Dorsolateral prefrontal cortex (tissue), 120 donors: ENCODE measurements at regions of chr10 and their contacts with region 1.

Region 1: DNA sequence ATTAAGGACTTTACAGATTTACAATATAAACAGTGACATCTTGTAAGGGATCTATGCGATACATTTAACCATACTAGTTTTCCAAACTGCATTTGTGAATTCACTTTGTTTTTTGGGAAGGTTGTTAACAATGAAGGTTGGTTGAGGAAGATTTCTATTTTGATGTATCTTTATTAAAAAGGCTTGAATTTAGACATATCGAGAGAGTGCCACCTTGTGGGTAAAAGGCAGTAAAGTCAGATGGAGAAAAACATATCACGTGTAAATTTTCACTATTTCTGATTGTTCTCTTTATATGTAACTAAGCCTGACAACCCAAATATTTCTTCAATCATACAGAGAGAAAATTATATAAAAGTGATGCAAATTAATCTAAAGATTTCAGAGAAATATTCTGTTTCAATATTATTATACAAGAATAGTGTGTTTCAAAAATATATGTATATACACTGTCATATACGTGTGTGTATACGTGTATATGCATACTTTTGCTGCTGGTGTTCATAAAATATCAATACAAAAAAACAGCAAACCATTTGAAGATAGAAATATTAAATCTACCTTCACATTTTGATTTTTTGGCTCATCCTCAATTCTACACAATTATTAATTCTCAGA is 988.6 kb downstream of the SORCS1 start:
- DNase-seq: no peak
- H3K4me3 ChIP-seq: no peak overlapping the region
- H3K27ac ChIP-seq: no peak overlapping the region
- H3K27me3 ChIP-seq: no peaks in the 10 kb centered on the region
- CTCF ChIP-seq: peak; percentile 45 to 83 (median 65)

Region 2: DNA sequence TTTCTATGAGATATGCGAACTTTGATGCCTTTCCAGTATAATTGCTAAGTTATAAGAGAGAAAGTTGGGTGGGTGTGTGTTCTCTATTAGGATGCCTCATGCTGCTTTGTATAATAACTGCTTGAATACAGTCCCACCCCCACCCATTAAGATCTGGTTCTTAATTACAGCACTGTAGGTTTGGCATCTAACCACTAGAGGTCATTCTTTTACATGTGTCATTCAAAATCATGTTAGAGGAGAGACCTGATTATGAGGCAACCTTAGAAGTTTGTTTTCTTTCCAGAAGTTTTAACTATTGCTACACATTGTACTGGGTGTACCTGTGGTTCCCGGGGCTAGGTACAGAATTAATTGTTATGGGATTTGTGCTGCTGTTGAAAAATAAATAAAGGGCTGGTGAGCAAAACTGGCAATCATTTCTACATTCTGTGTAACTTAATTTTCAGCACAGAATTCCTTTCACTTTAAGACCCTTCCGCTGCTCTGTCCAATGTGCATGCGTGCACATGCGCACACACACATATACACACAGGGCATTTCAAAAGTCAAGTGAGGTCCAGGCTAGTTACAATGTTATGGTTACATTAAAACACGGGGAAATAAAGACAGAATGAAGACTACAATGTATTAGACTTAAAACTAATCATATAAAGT is 378.5 kb before region 1 on chr10:
- intact Hi-C with region 1: loop called in 1 of 2 experiments (anchors 5 kb)
- DNase-seq: no peak
- H3K4me3 ChIP-seq: no peak overlapping the region
- H3K27ac ChIP-seq: no peak overlapping the region
- H3K27me3 ChIP-seq: no peaks in the 10 kb centered on the region
- CTCF ChIP-seq: peak in 55 of 56 donors; percentile 27 to 67 (median 50)

Region 3: DNA sequence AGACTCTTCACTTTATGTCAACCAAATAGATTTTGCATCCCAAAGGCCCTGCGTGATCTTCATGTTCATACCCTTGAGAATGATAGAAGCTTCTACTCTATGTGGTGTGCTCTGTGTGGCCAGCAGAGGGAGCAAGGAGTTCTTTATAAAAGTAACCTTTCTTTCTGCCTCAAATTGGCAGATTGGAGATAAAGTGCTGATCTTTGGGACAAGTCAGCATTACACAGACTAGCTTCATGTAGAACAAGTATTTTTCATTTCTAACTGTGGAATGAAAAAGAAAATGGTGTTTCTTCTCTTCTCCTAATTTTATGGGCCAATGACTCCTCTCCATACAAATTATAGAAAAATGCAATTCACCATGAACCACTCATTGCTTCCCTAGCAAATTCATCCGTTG is 225.5 kb before region 1 on chr10:
- intact Hi-C with region 1: loop called in 1 of 2 experiments (anchors 5 kb)
- DNase-seq: peak in 8 of 10 donors; percentile 10 to 79 (median 51)
- H3K4me3 ChIP-seq: no peak overlapping the region
- H3K27ac ChIP-seq: no peak overlapping the region
- H3K27me3 ChIP-seq: no peaks in the 10 kb centered on the region
- CTCF ChIP-seq: peak; percentile 49 to 95 (median 86)

Region 4: DNA sequence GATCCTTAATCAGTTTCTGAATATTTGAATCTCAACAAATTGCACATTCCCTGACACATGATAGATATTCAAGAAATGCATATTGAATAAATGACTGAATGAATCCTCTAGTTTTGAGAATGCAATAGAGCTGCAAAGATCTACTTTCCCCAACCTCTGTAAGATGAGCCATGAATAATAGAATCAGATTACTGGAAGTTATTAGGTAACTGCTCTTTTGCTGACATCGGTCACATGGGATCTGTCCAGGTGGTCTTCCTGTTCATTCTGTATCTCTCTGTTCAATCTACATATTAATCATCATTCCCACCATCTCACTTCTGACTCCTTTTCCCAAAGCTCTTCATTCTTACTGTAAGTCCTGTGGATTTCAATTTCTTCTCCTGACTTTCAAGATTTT is 350.0 kb after region 1 on chr10:
- intact Hi-C with region 1: no loop called
- DNase-seq: no peak
- H3K4me3 ChIP-seq: no peak overlapping the region
- H3K27ac ChIP-seq: no peak overlapping the region
- H3K27me3 ChIP-seq: no peaks in the 10 kb centered on the region
- CTCF ChIP-seq: no peak